Head of caudate nucleus (tissue), 42 donors: ENCODE measurements at regions of chr4 and their contacts with region 1.

Region 1: GRCh38 chr4:181143250-181143854 is 1099.8 kb upstream of the TENM3 start:
- DNase-seq: peak; percentile 32 to 96 (median 90)

Region 2: DNA sequence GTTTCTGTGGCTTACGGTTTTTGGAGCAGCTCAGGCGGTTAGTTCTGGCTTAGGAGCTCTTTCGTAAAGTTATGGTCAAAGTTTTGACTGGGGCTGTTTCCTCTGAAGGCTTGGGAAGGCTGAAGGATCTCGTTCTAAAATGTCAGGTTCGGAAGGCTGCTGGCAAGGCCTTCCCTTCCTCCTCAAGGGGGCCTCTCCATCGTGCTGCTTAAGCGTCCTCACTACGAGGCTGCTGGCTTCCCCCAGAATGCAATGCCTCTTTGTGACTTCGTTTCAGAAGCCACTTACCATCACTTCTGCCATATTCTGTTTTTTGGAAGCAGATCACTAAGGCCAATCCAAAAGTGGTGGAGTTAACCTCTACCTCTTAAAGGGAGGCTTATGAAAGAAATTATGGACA is 96.5 kb before region 1 on chr4:
- intact Hi-C with region 1: no loop called
- DNase-seq: no peak

Region 3: GRCh38 chr4:181528570-181529184 is 385.3 kb after region 1 on chr4:
- intact Hi-C with region 1: loop called (anchors 2 kb)
- DNase-seq: peak; percentile 70 to 93 (median 86)

Region 4: DNA sequence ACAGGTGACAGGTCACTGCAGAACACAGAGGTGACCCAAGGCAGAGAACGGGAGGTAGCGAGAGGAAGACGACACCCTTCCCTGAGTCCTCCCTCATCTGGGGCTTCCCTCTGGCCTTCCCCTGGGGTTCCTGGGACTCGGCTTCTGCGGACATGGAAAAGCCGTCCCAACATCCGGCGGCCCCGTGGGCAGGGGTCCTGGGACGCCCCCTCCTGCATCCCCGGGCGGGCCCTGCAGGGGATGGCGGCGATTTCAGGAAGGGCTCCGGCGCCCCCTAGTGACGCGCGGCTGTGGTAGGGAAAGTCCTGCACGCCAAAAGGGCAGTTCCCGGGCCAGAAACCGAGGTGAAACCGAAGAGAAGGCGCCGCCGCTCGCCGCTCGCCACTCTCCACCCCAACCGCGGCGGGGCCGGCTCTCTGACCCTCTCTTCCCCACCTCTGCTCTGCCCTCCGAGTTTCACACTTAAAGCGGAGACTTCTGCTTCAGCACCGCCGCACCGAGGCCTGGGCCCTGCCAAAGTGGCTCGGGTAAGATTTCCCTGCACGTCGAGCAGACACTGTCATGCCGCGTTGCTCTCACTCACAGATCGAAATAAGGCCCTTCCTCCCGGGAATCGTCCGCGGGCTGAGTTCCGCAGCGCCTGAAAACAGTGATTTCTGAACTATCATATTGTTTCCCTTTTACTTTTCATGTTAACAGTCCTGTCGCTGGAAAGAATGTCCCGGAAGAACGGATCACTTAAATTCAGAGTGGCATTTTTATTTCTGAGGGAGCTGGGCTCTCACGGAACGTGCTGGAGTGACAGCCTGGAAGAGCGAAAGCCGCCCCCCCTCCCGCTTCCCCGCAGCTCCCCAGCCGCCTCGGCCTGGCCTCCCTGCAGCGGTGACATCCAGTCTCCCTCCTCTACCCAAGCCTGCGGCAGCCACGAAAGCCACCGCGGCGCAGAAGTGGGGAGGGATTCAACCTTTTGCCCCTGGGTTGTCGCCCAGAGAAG is 1663.2 kb after region 1 on chr4:
- intact Hi-C with region 1: loop called (anchors 5 kb)
- DNase-seq: peak; percentile 58 to 92 (median 84)